PC-9 (cell line): ENCODE measurements at regions of chr1 and their contacts with region 1.

Region 1: DNA sequence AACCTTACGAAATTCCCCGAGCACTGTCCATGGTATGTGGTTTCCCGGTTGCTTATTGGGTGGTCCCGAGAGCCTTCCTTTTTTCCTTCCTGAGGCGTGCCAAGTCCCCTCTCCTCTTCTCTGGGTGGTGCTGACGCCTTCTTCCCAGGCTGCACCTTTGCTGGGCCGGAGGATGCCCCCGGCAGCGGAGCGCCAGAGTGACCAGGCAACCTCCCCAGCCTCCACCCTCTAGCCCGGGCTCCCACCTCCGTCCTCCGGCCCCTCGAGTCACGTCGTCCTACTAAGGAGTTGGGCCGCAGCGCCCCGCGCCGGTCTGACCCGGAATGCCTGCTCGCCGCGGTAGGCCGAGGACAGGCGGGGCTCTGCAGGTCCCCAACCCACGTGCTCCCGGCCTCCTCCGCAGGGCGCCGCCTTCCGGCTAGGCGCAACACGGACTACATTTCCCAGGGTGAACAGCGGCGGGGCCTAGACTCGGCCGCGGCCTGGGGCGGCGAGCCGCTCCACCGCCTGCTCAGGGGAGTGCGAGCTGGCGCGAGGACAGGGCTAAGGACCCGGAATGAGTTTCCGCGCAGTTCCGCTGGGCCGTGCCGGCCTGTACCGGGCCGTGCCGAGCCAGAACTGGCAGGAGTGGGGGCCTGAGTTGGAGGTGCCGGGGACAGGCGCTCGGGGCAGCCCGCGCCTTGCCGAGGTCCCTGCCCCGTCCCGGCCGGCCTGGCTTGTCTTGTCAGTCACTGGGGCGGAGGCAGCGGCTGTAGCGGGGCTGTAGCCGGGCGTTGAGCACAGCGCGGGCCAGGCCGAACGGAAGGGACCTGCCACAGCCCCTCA is at the start of gene IPO13:
- DNase-seq: peak; percentile 86 to 98
- H3K4me3 ChIP-seq: peak within 1 kb of the TSS; percentile 74
- H3K27ac ChIP-seq: peak within 1 kb of the TSS; percentile 75
- H3K4me1 ChIP-seq: peaks cover 26% of the 10 kb centered on the region
- H3K27me3 ChIP-seq: no peaks in the 10 kb centered on the region
- CTCF ChIP-seq: peak; percentile 79
- total RNA-seq, gene IPO13: 25.0 and 27.2 TPM in 2 replicates

Region 2: DNA sequence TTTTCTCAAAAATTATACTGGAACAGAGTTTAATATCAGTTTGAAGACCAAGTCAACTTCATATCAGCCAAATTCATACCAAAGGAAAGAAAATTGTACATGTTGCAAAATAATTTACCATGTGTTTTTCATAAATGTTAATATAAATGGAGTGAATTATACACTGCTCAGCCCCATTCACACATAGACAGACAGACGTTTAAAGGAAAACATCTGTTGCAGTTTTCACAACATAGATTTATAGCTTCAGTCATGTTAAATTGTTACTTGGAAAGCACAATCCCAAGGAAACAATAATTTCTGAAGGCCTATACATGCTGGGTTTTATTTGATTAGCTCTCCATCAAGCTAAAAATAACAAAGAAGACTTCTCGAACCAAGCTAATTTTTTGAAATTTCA is 465.0 kb before region 1 on chr1:
- CTCF ChIA-PET with region 1: no interaction called
- POLR2A ChIA-PET with region 1: interaction called, 14 read pairs
- intact Hi-C with region 1: no loop called
- DNase-seq: no peak
- H3K4me3 ChIP-seq: no peak overlapping the region
- H3K27ac ChIP-seq: no peak overlapping the region
- H3K4me1 ChIP-seq: peaks cover 18% of the 10 kb centered on the region
- H3K27me3 ChIP-seq: no peaks in the 10 kb centered on the region
- CTCF ChIP-seq: no peak

Region 3: DNA sequence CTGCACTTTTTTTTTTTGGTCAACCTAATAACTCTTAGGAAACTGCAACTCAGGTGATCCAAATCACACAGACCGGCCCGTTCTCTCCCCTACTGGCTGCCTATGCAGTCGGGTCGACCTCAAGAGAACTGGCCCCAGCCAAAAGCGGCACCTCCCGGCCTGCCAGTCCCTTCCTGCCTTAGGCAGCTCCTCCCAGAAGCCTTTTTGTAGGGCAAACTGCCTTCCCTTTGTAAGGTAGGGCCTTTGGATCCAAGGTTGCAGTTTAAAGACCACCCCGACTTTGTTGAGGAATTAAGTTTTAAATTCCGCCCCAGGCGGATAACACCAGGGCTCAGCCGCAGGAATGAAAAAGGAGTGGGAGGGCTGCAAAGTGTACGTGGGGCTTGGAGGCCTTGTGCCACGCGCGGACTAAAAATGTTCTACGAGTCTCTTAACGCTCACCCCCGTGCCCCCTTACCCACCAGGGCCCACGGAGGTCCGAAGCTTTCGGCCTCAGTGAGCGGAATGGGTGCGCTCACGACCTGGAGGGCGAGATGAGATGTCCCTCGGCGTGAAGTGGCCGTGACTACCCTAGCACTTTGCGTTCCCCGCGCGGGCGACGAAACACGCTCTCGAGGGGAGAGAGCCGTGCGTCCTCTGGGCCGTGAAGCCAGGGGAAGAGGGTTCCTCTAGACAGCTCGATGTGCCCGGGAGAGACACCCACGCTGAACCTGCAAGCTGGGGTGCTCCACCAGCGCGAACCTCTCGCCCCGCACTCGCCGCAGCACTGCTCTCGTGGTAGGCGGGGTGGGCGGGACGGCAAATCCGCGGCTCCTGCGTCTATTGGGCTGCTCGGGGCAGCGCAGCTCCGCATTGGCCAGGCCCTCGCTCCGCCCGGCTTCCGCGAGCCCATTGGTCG is 239.6 kb before region 1 on chr1:
- CTCF ChIA-PET with region 1: interaction called, 5 read pairs
- POLR2A ChIA-PET with region 1: no interaction called
- intact Hi-C with region 1: loop called (anchors 1 kb)
- DNase-seq: peak; percentile 81 to 96
- H3K4me3 ChIP-seq: peak overlapping the region; percentile 92
- H3K27ac ChIP-seq: no peak overlapping the region
- H3K4me1 ChIP-seq: peaks cover 28% of the 10 kb centered on the region
- H3K27me3 ChIP-seq: no peaks in the 10 kb centered on the region
- CTCF ChIP-seq: no peak

Region 4: DNA sequence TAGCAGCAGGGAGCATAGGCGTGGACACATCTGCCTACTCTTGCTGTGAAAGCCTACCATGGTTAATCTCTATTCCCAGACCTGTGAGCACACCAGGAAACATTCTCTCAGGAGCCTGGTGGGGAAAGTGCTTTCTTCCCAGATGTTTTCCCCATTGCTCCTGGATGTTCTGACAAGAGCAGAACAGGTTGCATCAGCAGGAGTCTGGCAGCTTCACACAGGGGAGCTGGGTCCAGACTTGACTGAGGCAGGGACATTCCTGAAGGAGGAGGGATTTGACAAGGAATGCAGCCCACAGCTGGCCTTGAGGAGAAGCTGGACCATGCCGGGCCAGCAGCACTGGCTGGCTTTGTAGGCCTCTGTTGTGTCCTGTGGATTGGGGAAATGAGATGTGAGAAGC is 33.8 kb before region 1 on chr1:
- CTCF ChIA-PET with region 1: no interaction called
- POLR2A ChIA-PET with region 1: no interaction called
- intact Hi-C with region 1: no loop called
- DNase-seq: no peak
- H3K4me3 ChIP-seq: no peak overlapping the region
- H3K27ac ChIP-seq: no peak overlapping the region
- H3K4me1 ChIP-seq: peaks cover 6% of the 10 kb centered on the region; the same call in 1 of the 2 replicates
- H3K27me3 ChIP-seq: no peaks in the 10 kb centered on the region
- CTCF ChIP-seq: no peak

Region 5: DNA sequence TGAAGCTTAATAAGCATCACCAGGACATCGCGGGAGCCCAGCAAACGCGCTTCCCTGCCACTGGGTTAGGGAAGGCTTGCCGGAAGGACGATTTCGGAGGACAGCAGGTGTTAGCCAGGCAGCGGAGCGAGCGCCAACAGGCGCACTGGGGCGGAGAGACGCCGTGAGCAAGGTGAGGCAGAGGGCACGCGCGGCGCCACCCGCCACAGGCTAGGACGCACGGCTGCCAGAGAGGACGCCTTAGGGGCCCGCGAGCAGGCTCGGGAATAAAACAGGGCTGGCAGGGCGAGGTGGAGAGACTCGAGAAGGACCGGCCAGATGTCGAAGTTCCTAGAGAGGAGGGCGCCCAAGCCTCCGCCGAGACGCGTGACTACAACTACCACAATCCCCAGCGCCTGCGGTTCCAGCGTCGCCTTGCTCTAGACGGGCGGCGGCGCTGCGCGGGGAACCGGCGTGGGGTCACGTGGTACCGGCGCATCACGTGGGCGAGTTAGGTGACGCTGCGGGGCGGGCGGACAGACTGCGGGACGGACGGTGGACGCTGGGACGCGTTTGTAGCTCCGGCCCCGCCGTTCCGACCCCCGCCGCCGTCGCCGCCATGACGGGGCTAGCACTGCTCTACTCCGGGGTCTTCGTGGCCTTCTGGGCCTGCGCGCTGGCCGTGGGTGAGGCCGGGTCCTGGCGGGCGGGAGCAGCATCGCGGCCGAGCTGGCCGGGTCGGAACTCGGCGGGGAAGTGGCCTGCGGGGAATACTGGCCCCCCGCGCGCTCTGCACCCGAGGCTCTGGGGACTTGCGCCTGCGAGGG is 28.2 kb after region 1 on chr1 and contains the start of gene ATP6V0B:
- CTCF ChIA-PET with region 1: interaction called, 3 read pairs
- POLR2A ChIA-PET with region 1: interaction called, 3 read pairs
- intact Hi-C with region 1: loop called (anchors 1 kb)
- DNase-seq: peak; percentile 84 to 96
- H3K4me3 ChIP-seq: peak within 1 kb of the TSS; percentile 67
- H3K27ac ChIP-seq: peak within 1 kb of the TSS; percentile 38
- H3K4me1 ChIP-seq: peaks cover 46% of the 10 kb centered on the region
- H3K27me3 ChIP-seq: no peaks in the 10 kb centered on the region
- CTCF ChIP-seq: no peak
- total RNA-seq, gene ATP6V0B: 110 and 125 TPM in 2 replicates

Region 6: GRCh38 chr1:43991476-43992231 is 45.2 kb after region 1 on chr1 and contains the start of gene CCDC24:
- CTCF ChIA-PET with region 1: interaction called, 3 read pairs
- POLR2A ChIA-PET with region 1: no interaction called
- intact Hi-C with region 1: loop called (anchors 2 kb)
- DNase-seq: peak; percentile 85 to 96
- H3K4me3 ChIP-seq: peak within 1 kb of the TSS; percentile 59
- H3K27ac ChIP-seq: peak within 1 kb of the TSS; percentile 86
- H3K4me1 ChIP-seq: peaks cover 25% of the 10 kb centered on the region
- H3K27me3 ChIP-seq: no peaks in the 10 kb centered on the region
- CTCF ChIP-seq: no peak
- total RNA-seq, gene CCDC24: 47.9 and 56.5 TPM in 2 replicates